ENCODE measurements at regions of chr3 and their contacts with region 1.

Region 1: GRCh38 chr3:15108082-15108545 is 9.2 kb upstream of the RBSN start:
- DNase-seq: peak; percentile 10
- H3K4me3 ChIP-seq: peak overlapping the region in 1 of 4 donors; percentile 15
- H3K27ac ChIP-seq: no peak overlapping the region
- H3K4me1 ChIP-seq: peaks cover 0 to 14% (median 6%) of the 10 kb centered on the region in 3 donors
- H3K27me3 ChIP-seq: peaks cover 0 to 4% (median 0%) of the 10 kb centered on the region in 4 donors
- CTCF ChIP-seq: peak; percentile 67 to 89 (median 80)
- POLR2A ChIP-seq: no peak

Region 2: GRCh38 chr3:15205934-15206661 is 98.0 kb after region 1 on chr3 and contains the start of gene CAPN7:
- intact Hi-C with region 1: loop called (anchors 10 kb)
- DNase-seq: no peak
- H3K4me3 ChIP-seq: peak within 1 kb of the TSS; percentile 75 to 98 (median 94)
- H3K27ac ChIP-seq: peak within 1 kb of the TSS; percentile 94 to 100 (median 98)
- H3K4me1 ChIP-seq: peaks cover 0 to 38% (median 15%) of the 10 kb centered on the region in 3 donors
- H3K27me3 ChIP-seq: no peaks in the 10 kb centered on the region
- CTCF ChIP-seq: peak in 5 of 6 experiments; percentile 18 to 49 (median 38)
- POLR2A ChIP-seq: peak in 3 of 4 donors; percentile 87 to 98 (median 94)
- total RNA-seq, gene CAPN7: 20.7 to 52.5 (median 27.0) TPM